Activated T-helper 2 cell treated with anti-CD3 and anti-CD28 coated beads, Interferon-gamma antibody, Interleukin-2, Interleukin-4, amounts not matched to agents 10 μg/mL and 5 μg/mL and 100 μg/mL, durations not matched to agents 14 hours and 24 hours and 36 hours (primary cell): ENCODE measurements at regions of chrX and their contacts with region 1.

Region 1: GRCh38 chrX:56563231-56564161 is at the start of gene UBQLN2:
- DNase-seq: peak; percentile 74
- H3K4me3 Mint-ChIP-seq: peak within 1 kb of the TSS; percentile 93
- H3K27ac Mint-ChIP-seq: peak within 1 kb of the TSS; percentile 98
- H3K4me1 Mint-ChIP-seq: peaks cover 11% of the 10 kb centered on the region
- H3K27me3 Mint-ChIP-seq: no peaks in the 10 kb centered on the region
- total RNA-seq, gene UBQLN2: 37.6 and 40.5 TPM in 2 replicates

Region 2: DNA sequence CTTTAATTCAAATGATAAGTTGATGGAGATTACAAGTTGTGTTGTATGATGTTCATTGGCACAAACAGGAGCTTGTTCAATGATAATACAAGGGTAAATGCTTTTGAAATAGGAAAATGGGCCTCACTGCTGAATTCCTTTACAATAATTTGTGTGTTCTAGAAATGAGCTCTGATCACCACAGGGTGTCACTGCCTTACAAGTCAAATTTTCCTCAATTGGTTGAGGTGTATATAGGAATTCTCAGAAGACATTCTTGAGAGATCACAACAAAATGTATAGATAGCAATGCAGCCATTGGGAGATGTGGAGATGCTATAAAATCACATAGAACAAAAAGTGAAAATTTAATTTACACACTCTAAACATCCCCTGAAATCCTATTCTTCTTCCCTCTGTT is 281.7 kb before region 1 on chrX:
- intact Hi-C with region 1: loop called (anchors 10 kb)
- DNase-seq: no peak
- H3K4me3 Mint-ChIP-seq: no peak overlapping the region
- H3K27ac Mint-ChIP-seq: no peak overlapping the region
- H3K4me1 Mint-ChIP-seq: peaks cover 8% of the 10 kb centered on the region
- H3K27me3 Mint-ChIP-seq: no peaks in the 10 kb centered on the region

Region 3: DNA sequence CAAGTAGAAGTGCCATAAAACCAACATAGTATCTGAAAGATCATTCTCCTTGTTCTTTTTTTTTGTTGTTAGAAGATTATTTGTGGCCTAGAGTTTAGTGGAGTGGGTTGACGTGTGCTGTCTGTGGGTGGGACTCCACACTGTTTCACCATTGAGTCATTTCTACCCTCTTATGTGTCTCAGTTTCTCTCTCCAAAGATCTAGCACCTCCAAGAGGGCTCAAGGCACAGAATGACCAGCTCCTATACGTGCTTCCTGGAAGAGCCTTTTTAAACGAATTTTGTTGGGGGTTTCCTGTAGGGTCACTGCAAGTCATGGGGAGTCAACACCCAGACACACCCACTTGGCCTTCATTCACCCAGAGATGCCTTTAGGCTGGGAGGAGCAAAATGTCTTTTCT is 181.2 kb before region 1 on chrX:
- intact Hi-C with region 1: loop called (anchors 5 kb)
- DNase-seq: no peak
- H3K4me3 Mint-ChIP-seq: no peak overlapping the region
- H3K27ac Mint-ChIP-seq: peak overlapping the region; percentile 85
- H3K4me1 Mint-ChIP-seq: peaks cover 32% of the 10 kb centered on the region
- H3K27me3 Mint-ChIP-seq: no peaks in the 10 kb centered on the region

Region 4: GRCh38 chrX:56813318-56813837 is 249.9 kb after region 1 on chrX:
- intact Hi-C with region 1: loop called (anchors 5 kb)
- DNase-seq: peak; percentile 53
- H3K4me3 Mint-ChIP-seq: peak overlapping the region; percentile 75
- H3K27ac Mint-ChIP-seq: peak overlapping the region; percentile 96
- H3K4me1 Mint-ChIP-seq: peaks cover 29% of the 10 kb centered on the region
- H3K27me3 Mint-ChIP-seq: no peaks in the 10 kb centered on the region

Region 5: GRCh38 chrX:57266275-57266674 is 702.8 kb after region 1 on chrX:
- intact Hi-C with region 1: no loop called
- DNase-seq: no peak
- H3K4me3 Mint-ChIP-seq: no peak overlapping the region
- H3K27ac Mint-ChIP-seq: no peak overlapping the region
- H3K4me1 Mint-ChIP-seq: no peaks in the 10 kb centered on the region
- H3K27me3 Mint-ChIP-seq: no peaks in the 10 kb centered on the region